ENCODE measurements at regions of chr3 and their contacts with region 1.

Region 1: DNA sequence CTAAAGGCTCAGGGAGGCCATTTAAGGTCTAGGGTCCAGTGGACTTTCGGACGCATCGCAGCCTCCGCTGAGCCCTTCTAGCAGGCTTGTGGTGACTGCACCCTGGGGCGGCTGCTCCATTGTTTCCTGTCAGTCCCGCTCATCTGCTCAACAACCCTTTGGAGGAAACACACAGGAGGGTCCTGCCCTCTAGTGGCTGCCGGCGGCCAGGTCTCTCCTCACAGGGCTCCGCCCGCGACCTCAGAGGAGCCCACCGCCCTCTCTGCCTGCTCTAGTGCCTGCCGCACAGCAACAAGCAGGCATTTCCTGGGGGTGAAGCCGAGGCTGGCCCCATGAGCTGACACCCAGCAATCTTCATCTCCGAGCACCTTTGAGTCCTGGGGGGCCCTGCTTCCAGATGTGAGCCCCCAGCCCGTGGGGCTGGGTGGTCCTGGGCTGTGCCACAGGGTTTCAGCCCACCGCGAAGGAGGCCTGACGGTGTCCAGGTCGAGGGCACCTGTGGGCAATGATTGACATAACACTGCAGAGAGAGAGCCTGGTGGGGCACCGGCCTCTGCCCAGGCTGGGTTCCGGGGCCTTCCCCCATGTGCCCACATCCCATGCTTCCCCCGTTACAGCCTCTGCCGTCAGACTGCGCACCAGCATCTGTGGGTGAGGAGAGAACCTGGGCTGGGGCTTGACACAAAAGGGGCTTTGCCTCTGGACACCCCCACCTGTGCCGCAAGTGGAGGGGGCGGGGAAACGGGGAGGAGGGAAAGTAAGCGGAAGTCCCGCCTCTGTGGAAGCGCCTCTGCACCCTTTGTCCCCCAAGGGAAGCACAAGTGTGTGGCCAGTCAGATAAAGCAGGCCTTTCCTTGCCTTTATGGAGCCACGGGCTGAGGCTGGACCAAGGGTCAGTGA is 27.0 kb upstream of the SFMBT1 start:
- DNase-seq: peak; percentile 78 to 86 (median 80)
- ATAC-seq: peak; percentile 97
- H3K4me3 ChIP-seq: peak overlapping the region; percentile 46
- H3K27ac ChIP-seq: peak overlapping the region; percentile 40; the same call in 2 of the 3 replicates
- H3K4me1 ChIP-seq: peaks cover 14 to 24% of the 10 kb centered on the region in 2 experiments; a peak in 4 of 5 replicates
- H3K27me3 ChIP-seq: no peaks in the 10 kb centered on the region
- CTCF ChIP-seq: peak; percentile 80 to 83 (median 80)
- EP300 ChIP-seq: no peak
- POLR2A ChIP-seq: no peak
- RAD21 ChIP-seq: peak; percentile 73 to 85

Region 2: DNA sequence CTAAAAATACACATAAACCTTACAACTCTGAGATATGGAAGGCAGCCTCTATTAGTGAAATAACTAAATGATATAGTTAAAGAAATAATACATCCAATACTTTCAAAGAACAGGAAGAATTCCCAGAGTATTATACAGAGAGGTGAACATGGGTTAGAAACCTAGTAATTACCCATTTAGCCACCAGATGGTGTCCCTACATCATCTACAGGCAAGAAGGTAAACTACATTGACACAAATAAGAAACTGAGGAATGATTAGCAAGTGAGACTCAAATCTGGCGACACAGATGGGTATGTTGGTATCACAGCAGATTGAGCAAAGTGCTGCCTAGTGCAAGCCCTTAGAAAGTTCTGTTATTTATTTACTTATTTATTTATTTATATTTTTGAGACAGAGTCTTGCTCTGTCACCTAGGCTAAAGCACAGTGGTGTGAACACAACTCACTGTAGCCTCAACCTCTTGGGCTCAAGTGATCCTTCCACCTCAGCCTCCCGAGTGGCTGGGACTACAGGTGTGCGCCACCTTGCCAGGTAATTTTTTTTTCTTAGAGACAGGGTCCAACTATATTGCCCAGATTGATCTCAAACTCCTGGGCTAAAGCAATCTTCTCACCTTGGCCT is 330.4 kb before region 1 on chr3:
- CTCF ChIA-PET with region 1: no interaction called
- POLR2A ChIA-PET with region 1: no interaction called
- in situ Hi-C with region 1: no loop called
- intact Hi-C with region 1: loop called (anchors 10 kb)
- DNase-seq: peak; percentile 16 to 33 (median 26)
- ATAC-seq: peak; percentile 66
- H3K4me3 ChIP-seq: no peak overlapping the region
- H3K27ac ChIP-seq: no peak overlapping the region
- H3K4me1 ChIP-seq: no peaks in the 10 kb centered on the region
- H3K27me3 ChIP-seq: no peaks in the 10 kb centered on the region
- CTCF ChIP-seq: peak; percentile 44 to 66 (median 46); a peak in 4 of 6 replicates
- EP300 ChIP-seq: no peak
- POLR2A ChIP-seq: no peak
- RAD21 ChIP-seq: peak; percentile 69

Region 3: GRCh38 chr3:52845691-52846431 is 227.0 kb before region 1 on chr3:
- CTCF ChIA-PET with region 1: interaction called, 5 read pairs
- POLR2A ChIA-PET with region 1: no interaction called
- in situ Hi-C with region 1: loop called (anchors 10 kb)
- intact Hi-C with region 1: loop called (anchors 1 kb)
- DNase-seq: peak; percentile 15 to 52 (median 50)
- ATAC-seq: peak; percentile 79
- H3K4me3 ChIP-seq: no peak overlapping the region
- H3K27ac ChIP-seq: no peak overlapping the region
- H3K4me1 ChIP-seq: no peaks in the 10 kb centered on the region
- H3K27me3 ChIP-seq: no peaks in the 10 kb centered on the region
- CTCF ChIP-seq: peak; percentile 33 to 43 (median 34); a peak in 3 of 6 replicates
- EP300 ChIP-seq: no peak
- POLR2A ChIP-seq: no peak
- RAD21 ChIP-seq: no peak

Region 4: GRCh38 chr3:52934630-52935530 is 138.0 kb before region 1 on chr3:
- CTCF ChIA-PET with region 1: no interaction called
- POLR2A ChIA-PET with region 1: no interaction called
- in situ Hi-C with region 1: no loop called
- intact Hi-C with region 1: loop called (anchors 2 kb)
- DNase-seq: peak; percentile 45 to 59 (median 54)
- ATAC-seq: peak; percentile 89
- H3K4me3 ChIP-seq: no peak overlapping the region
- H3K27ac ChIP-seq: no peak overlapping the region
- H3K4me1 ChIP-seq: no peaks in the 10 kb centered on the region; a peak in 1 of 5 replicates
- H3K27me3 ChIP-seq: no peaks in the 10 kb centered on the region
- CTCF ChIP-seq: peak; percentile 67 to 75 (median 72)
- EP300 ChIP-seq: no peak
- POLR2A ChIP-seq: no peak
- RAD21 ChIP-seq: peak; percentile 35 to 65